ENCODE measurements at regions of chr1 and their contacts with region 1.

Region 1: GRCh38 chr1:153626922-153627796 is at the start of gene S100A13:
- DNase-seq: peak; percentile 98
- H3K4me3 Mint-ChIP-seq: peak within 1 kb of the TSS; percentile 84
- H3K27ac Mint-ChIP-seq: peak within 1 kb of the TSS; percentile 91
- H3K4me1 Mint-ChIP-seq: peaks cover 38% of the 10 kb centered on the region
- H3K27me3 Mint-ChIP-seq: no peaks in the 10 kb centered on the region
- CTCF ChIP-seq: peak; percentile 86
- total RNA-seq, gene S100A13: 210 and 236 TPM in 2 replicates

Region 2: DNA sequence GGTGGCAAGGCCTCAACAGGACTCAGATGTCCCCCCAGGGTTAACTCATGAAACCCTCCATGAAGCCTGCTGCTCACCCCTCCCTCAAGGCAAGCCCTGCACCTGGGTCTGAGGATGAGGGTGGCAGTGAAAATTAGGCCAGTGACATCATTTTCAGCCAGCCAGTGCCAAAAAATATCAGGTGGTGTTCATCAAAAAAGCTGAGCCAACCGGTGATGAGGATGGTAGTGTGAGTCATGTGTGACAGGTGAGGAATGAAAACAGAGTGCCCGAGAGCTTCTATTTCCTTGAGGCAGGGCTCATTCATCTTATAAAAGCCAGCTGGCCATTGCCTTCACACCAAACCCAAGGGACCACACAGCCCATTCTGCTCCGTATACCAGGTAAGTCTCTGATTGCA is 643.4 kb before region 1 on chr1 and contains the start of gene SPRR1A:
- CTCF ChIA-PET with region 1: no interaction called
- POLR2A ChIA-PET with region 1: no interaction called
- intact Hi-C with region 1: no loop called
- DNase-seq: peak; percentile 70
- H3K4me3 Mint-ChIP-seq: no peak within 1 kb of the TSS
- H3K27ac Mint-ChIP-seq: no peak within 1 kb of the TSS
- H3K4me1 Mint-ChIP-seq: peaks cover 5% of the 10 kb centered on the region
- H3K27me3 Mint-ChIP-seq: no peaks in the 10 kb centered on the region
- CTCF ChIP-seq: no peak
- total RNA-seq, gene SPRR1A: not detected in 2 replicates

Region 3: GRCh38 chr1:153526132-153526543 is 101.0 kb before region 1 on chr1:
- CTCF ChIA-PET with region 1: interaction called, 3 read pairs
- POLR2A ChIA-PET with region 1: interaction called, 13 read pairs
- intact Hi-C with region 1: no loop called
- DNase-seq: peak; percentile 94
- H3K4me3 Mint-ChIP-seq: peak overlapping the region; percentile 29
- H3K27ac Mint-ChIP-seq: peak overlapping the region; percentile 85
- H3K4me1 Mint-ChIP-seq: peaks cover 38% of the 10 kb centered on the region
- H3K27me3 Mint-ChIP-seq: no peaks in the 10 kb centered on the region
- CTCF ChIP-seq: no peak

Region 4: GRCh38 chr1:153532769-153533599 is 94.2 kb before region 1 on chr1:
- CTCF ChIA-PET with region 1: interaction called, 7 read pairs
- POLR2A ChIA-PET with region 1: interaction called, 11 read pairs
- intact Hi-C with region 1: no loop called
- DNase-seq: peak; percentile 97
- H3K4me3 Mint-ChIP-seq: peak overlapping the region; percentile 99
- H3K27ac Mint-ChIP-seq: peak overlapping the region; percentile 75
- H3K4me1 Mint-ChIP-seq: peaks cover 47% of the 10 kb centered on the region
- H3K27me3 Mint-ChIP-seq: no peaks in the 10 kb centered on the region
- CTCF ChIP-seq: peak; percentile 93

Region 5: DNA sequence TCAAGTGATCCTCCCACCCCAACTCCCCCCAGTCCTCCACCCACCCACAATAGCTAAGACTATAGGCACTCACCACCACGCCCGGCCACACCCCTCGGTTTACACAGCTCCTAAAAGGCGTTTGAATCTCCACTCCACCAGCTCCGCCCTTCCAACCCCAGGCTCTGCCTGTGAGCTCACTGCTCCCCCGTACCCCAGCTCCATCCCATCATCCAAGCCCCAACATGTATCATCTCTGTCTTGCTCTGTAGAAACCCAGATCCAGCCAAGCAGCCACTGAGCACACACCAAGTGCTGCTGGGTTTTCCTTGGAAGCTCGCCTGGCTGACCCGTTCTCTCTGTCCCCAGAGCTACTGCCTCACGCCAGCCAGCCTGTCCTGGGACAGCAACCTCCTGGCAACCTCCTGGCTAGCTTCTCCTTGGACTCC is 49.5 kb before region 1 on chr1:
- CTCF ChIA-PET with region 1: interaction called, 66 read pairs
- POLR2A ChIA-PET with region 1: interaction called, 20 read pairs
- intact Hi-C with region 1: loop called (anchors 1 kb)
- DNase-seq: no peak
- H3K4me3 Mint-ChIP-seq: no peak overlapping the region
- H3K27ac Mint-ChIP-seq: no peak overlapping the region
- H3K4me1 Mint-ChIP-seq: peaks cover 25% of the 10 kb centered on the region
- H3K27me3 Mint-ChIP-seq: no peaks in the 10 kb centered on the region
- CTCF ChIP-seq: no peak

Region 6: DNA sequence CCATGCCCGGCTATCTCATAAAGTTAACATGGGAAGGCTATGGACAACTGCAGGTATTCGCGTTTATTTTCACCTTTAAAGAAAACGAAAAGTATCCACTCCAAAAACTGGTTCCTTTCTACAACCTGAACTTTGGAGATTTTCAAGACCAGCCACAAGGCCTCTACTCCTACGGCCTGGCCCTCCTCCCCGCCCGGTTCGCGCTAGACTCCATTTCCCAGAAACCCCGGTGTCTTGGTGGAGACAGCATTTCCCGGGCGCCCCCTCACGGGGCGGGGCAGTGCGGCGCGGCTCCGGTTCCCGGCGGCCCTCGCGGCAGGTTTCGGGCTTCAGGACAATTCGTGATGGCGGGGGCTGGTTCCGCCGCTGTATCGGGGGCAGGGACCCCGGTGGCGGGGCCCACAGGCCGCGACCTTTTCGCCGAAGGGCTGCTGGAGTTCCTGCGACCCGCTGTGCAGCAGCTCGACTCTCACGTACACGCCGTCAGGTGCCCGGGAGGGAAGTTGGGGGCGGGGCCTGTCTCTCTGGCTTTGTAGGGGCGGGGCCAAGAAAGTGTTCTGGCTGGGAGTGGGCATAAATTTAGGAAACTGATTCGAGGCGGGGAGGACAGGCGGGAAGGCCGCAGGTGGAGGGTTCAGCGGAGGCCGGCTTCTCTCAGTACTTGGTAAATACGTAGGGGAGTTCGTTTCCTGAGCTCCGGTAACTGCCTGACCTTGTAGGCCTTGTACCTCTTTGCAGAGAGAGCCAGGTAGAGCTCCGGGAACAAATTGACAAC is 31.4 kb after region 1 on chr1 and contains the start of gene SNAPIN:
- CTCF ChIA-PET with region 1: interaction called, 4 read pairs
- POLR2A ChIA-PET with region 1: interaction called, 1,272 read pairs
- intact Hi-C with region 1: loop called (anchors 2 kb)
- DNase-seq: peak; percentile 95
- H3K4me3 Mint-ChIP-seq: peak within 1 kb of the TSS; percentile 92
- H3K27ac Mint-ChIP-seq: peak within 1 kb of the TSS; percentile 91
- H3K4me1 Mint-ChIP-seq: peaks cover 5% of the 10 kb centered on the region
- H3K27me3 Mint-ChIP-seq: no peaks in the 10 kb centered on the region
- CTCF ChIP-seq: no peak
- total RNA-seq, gene SNAPIN: 55.9 and 63.7 TPM in 2 replicates

Measured in MCF 10A (cell line).